ENCODE measurements at regions of chr12 and their contacts with region 1.

Region 1: GRCh38 chr12:14803011-14803829 is at the starts of genes C12orf60 and WBP11:
- DNase-seq: peak; percentile 96 to 99
- H3K4me3 ChIP-seq: peak within 1 kb of the TSS; percentile 86
- H3K4me3 Mint-ChIP-seq: no peak within 1 kb of the TSS
- H3K27ac Mint-ChIP-seq: no peak within 1 kb of the TSS
- H3K4me1 ChIP-seq: peaks cover 12% of the 10 kb centered on the region; the same call in 1 of the 2 replicates
- H3K4me1 Mint-ChIP-seq: peaks cover 16% of the 10 kb centered on the region
- H3K27me3 ChIP-seq: no peaks in the 10 kb centered on the region
- H3K27me3 Mint-ChIP-seq: no peaks in the 10 kb centered on the region
- CTCF ChIP-seq: no peak
- total RNA-seq, gene C12orf60: 1.8 and 2.8 TPM in 2 replicates
- total RNA-seq, gene WBP11: 159 and 184 TPM in 2 replicates

Region 2: DNA sequence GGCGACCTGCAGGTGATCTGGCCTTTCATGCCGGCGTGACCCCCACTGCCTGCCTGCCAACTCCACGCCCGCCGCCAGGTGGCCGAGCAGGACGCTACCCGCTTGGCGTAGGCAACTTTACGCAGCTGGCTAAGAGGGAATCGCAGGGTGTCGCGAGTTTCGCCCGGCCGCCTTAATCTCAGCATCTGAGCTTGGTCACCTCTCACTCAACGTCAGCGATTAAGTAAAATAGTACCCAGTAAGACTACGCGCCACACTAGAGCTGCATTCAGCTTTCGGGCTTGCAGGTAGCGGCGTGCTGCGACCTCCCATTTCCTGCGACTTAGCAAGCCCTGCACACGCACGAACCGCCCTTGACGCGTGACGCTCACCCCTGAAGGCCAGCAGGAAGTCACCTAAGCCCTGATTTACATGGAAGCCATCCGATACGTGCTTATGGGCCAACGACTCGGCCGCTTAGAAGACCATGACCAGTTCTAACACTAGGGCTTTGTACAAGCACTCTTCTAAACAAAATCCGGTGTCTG is 33.2 kb before region 1 on chr12:
- CTCF ChIA-PET with region 1: interaction called, 16 read pairs
- POLR2A ChIA-PET with region 1: interaction called, 42 read pairs
- intact Hi-C with region 1: loop called (anchors 1 kb)
- DNase-seq: peak; percentile 91 to 95
- H3K4me3 ChIP-seq: peak overlapping the region; percentile 96
- H3K4me3 Mint-ChIP-seq: peak overlapping the region; percentile 90
- H3K27ac Mint-ChIP-seq: peak overlapping the region; percentile 96
- H3K4me1 ChIP-seq: peaks cover 13% of the 10 kb centered on the region; the same call in 1 of the 2 replicates
- H3K4me1 Mint-ChIP-seq: peaks cover 20% of the 10 kb centered on the region
- H3K27me3 ChIP-seq: no peaks in the 10 kb centered on the region
- H3K27me3 Mint-ChIP-seq: no peaks in the 10 kb centered on the region
- CTCF ChIP-seq: peak; percentile 93 to 98

Region 3: GRCh38 chr12:14892726-14893505 is 89.7 kb after region 1 on chr12:
- CTCF ChIA-PET with region 1: no interaction called
- POLR2A ChIA-PET with region 1: no interaction called
- intact Hi-C with region 1: no loop called
- DNase-seq: peak in 1 of 2 experiments; percentile 18
- H3K4me3 ChIP-seq: no peak overlapping the region
- H3K4me3 Mint-ChIP-seq: no peak overlapping the region
- H3K27ac Mint-ChIP-seq: no peak overlapping the region
- H3K4me1 ChIP-seq: no peaks in the 10 kb centered on the region
- H3K4me1 Mint-ChIP-seq: no peaks in the 10 kb centered on the region
- H3K27me3 ChIP-seq: no peaks in the 10 kb centered on the region
- H3K27me3 Mint-ChIP-seq: peaks cover 7% of the 10 kb centered on the region
- CTCF ChIP-seq: peak in 1 of 2 experiments; percentile 19

Region 4: DNA sequence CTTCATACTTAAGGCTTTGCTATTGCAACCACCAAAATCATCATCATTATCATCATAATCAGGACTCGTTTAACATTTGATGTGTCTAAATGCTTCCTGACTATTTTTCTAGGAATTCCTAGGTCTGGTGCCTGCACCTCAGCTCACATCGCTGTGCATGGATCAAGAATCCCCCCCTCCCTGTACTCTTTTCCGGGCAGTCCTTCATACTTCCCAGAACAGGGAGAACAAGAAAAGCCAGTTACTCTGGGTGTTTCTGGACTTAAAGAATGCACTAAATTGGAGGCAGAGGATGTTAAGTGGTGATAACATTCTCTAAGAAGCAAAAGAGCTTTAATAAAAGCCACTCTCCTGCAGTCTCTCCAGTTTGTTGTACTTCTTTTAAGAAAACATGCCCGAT is 125.7 kb after region 1 on chr12:
- CTCF ChIA-PET with region 1: no interaction called
- POLR2A ChIA-PET with region 1: no interaction called
- intact Hi-C with region 1: loop called (anchors 2 kb)
- DNase-seq: peak; percentile 72 to 87
- H3K4me3 ChIP-seq: no peak overlapping the region
- H3K4me3 Mint-ChIP-seq: peak overlapping the region; percentile 71
- H3K27ac Mint-ChIP-seq: peak overlapping the region; percentile 51
- H3K4me1 ChIP-seq: peaks cover 51% of the 10 kb centered on the region
- H3K4me1 Mint-ChIP-seq: peaks cover 37% of the 10 kb centered on the region
- H3K27me3 ChIP-seq: no peaks in the 10 kb centered on the region
- H3K27me3 Mint-ChIP-seq: no peaks in the 10 kb centered on the region
- CTCF ChIP-seq: no peak

Measured in Caco-2 (cell line).